ENCODE measurements at regions of chr7 and their contacts with region 1.

Region 1: DNA sequence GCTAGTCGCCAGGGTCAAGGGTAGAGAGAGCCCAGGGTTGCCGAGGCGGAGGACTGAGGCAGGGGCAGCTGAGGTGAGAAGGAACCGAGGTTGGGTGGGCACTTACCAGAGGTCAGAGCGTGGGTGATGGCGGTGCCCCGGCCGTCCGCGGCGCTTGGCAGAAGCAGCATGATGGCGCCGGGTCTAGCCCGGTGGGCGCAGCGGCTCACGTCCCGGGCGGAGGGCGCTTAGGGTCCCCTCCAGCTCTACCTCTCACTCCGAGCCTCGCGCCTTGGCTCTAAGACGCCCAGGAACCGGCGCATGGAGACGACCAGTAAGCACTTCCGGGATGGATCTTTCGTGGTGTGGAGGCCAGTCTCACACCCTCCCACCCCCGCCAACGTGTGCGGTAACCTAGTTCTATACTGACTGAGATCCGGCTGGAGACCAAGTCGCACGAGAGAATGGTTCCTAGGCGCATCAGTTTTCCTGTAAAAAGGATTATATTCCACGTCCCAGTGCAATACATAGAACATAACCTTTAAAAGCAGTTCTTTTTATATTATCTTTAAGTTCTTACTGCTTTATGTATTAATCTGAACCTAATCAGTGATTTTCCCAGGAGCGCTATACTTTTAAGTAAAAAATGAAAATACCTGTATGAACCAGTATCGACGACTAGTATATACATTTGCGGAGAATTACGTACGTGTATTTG is at the start of gene DNAJC2:
- DNase-seq: peak; percentile 72 to 95 (median 86)
- ATAC-seq: peak; percentile 88
- H3K4me3 ChIP-seq: peak within 1 kb of the TSS; percentile 82 to 96
- H3K4me3 Mint-ChIP-seq: peak within 1 kb of the TSS; percentile 95
- H3K27ac ChIP-seq: peak within 1 kb of the TSS; percentile 86
- H3K27ac Mint-ChIP-seq: peak within 1 kb of the TSS; percentile 97
- H3K4me1 ChIP-seq: peaks cover 45% of the 10 kb centered on the region
- H3K4me1 Mint-ChIP-seq: peaks cover 70% of the 10 kb centered on the region
- H3K27me3 ChIP-seq: no peaks in the 10 kb centered on the region
- H3K27me3 Mint-ChIP-seq: no peaks in the 10 kb centered on the region
- CTCF ChIP-seq: no peak
- total RNA-seq, gene DNAJC2: 84.5 to 94.6 TPM

Region 2: DNA sequence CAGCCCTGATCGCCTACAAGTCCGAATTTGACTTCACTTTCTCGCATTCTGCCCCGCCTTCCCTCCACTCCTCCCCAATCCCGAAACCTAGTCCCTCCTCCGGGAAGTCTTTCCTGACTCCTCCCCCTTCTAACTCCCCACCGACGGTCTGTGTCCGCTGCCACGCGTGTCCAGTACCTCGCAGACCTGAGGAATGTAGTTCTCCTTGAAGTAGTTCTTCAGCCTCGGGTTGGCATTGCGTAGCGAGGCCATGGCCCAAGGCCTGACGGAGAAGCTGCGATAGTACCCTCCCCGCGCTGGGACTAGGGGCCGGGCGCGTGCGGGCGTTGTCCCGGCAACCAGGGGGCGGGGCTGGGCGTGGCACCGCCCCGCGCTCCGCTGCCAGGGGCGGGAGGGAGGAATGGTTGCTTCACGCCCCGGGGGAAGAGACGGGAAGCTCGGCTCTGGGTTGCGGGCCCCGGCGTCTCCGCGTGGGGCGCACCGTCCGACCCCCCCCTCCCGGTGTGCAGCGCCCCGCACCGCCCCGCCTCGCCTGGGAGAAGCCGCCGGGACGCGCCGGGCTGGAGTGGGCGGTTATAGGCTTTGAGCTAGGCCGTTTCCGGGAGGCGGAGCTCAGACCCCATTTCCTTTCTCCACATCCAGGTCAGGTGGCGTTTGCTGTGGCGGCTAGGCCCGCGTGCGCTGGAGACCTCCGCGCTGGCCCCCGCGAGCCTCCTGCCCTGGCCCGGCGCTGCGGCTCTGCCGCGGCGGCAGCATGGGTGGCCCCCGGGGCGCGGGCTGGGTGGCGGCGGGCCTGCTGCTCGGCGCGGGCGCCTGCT is 269.9 kb before region 1 on chr7 and contains the starts of genes ARMC10 and FBXL13:
- CTCF ChIA-PET with region 1: no interaction called
- POLR2A ChIA-PET with region 1: no interaction called
- intact Hi-C with region 1: loop called (anchors 1 to 10 kb)
- DNase-seq: peak; percentile 79 to 95 (median 87)
- ATAC-seq: peak; percentile 78
- H3K4me3 ChIP-seq: peak within 1 kb of the TSS; percentile 81 to 99
- H3K4me3 Mint-ChIP-seq: peak within 1 kb of the TSS; percentile 98
- H3K27ac ChIP-seq: peak within 1 kb of the TSS; percentile 77 to 81
- H3K27ac Mint-ChIP-seq: peak within 1 kb of the TSS; percentile 96
- H3K4me1 ChIP-seq: peaks cover 26% of the 10 kb centered on the region
- H3K4me1 Mint-ChIP-seq: peaks cover 45% of the 10 kb centered on the region
- H3K27me3 ChIP-seq: no peaks in the 10 kb centered on the region
- H3K27me3 Mint-ChIP-seq: no peaks in the 10 kb centered on the region
- CTCF ChIP-seq: no peak
- total RNA-seq, gene ARMC10: 6.3 to 6.6 TPM
- total RNA-seq, gene FBXL13: 1.5 to 2.4 TPM

Region 3: GRCh38 chr7:103148994-103149807 is 195.4 kb before region 1 on chr7 and contains the start of gene NAPEPLD:
- CTCF ChIA-PET with region 1: no interaction called
- POLR2A ChIA-PET with region 1: no interaction called
- intact Hi-C with region 1: loop called (anchors 5 kb)
- DNase-seq: peak; percentile 47 to 89 (median 68)
- ATAC-seq: peak; percentile 90
- H3K4me3 ChIP-seq: peak within 1 kb of the TSS; percentile 93 to 95
- H3K4me3 Mint-ChIP-seq: peak within 1 kb of the TSS; percentile 98
- H3K27ac ChIP-seq: peak within 1 kb of the TSS; percentile 68 to 84
- H3K27ac Mint-ChIP-seq: peak within 1 kb of the TSS; percentile 96
- H3K4me1 ChIP-seq: peaks cover 21% of the 10 kb centered on the region
- H3K4me1 Mint-ChIP-seq: peaks cover 46% of the 10 kb centered on the region
- H3K27me3 ChIP-seq: no peaks in the 10 kb centered on the region
- H3K27me3 Mint-ChIP-seq: no peaks in the 10 kb centered on the region
- CTCF ChIP-seq: no peak
- total RNA-seq, gene NAPEPLD: 0.81 to 2.8 TPM

Region 4: GRCh38 chr7:103296901-103297836 is 47.4 kb before region 1 on chr7 and contains the start of gene PMPCB:
- CTCF ChIA-PET with region 1: no interaction called
- POLR2A ChIA-PET with region 1: no interaction called
- intact Hi-C with region 1: loop called (anchors 1 kb)
- DNase-seq: peak; percentile 92 to 98 (median 97)
- ATAC-seq: peak; percentile 100
- H3K4me3 ChIP-seq: peak within 1 kb of the TSS; percentile 72 to 75
- H3K4me3 Mint-ChIP-seq: peak within 1 kb of the TSS; percentile 83
- H3K27ac ChIP-seq: peak within 1 kb of the TSS; percentile 76 to 92
- H3K27ac Mint-ChIP-seq: peak within 1 kb of the TSS; percentile 85
- H3K4me1 ChIP-seq: peaks cover 19% of the 10 kb centered on the region
- H3K4me1 Mint-ChIP-seq: peaks cover 43% of the 10 kb centered on the region
- H3K27me3 ChIP-seq: no peaks in the 10 kb centered on the region
- H3K27me3 Mint-ChIP-seq: no peaks in the 10 kb centered on the region
- CTCF ChIP-seq: peak; percentile 82
- total RNA-seq, gene PMPCB: 104 to 108 TPM

Region 5: DNA sequence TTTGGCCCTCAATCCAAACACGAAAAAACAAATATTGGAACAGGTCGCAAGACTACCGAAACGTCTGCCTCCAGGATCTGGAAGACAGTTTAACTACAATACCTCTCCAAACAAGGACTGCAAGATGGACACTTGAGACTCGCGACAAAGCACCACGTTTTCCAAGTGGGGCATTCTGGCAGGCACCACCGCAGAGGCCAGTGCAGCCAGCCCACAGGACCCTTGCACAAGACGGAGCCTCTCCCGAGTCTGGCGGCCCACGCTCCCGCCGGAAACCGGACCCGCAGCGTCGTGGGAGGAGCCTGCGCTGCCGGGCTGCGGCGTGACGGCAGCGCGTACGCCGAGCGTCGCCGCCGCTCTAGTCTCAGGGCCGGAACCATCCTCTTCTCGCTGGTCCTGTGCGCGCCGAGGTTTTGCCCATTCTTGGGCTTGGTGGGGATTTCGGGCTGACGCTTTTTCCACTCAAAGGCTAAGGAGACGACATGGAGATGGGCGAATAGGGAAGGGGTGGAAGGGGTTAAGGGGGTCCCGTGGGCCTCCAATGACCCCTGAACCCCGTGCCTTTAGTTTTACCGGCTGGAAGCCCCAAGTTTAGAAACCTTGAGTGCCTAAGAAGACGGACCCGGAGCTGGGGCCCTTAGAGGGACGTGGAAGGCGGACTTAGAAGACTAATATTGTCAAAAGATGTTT is 863.3 kb after region 1 on chr7 and contains the start of gene ORC5:
- CTCF ChIA-PET with region 1: no interaction called
- POLR2A ChIA-PET with region 1: no interaction called
- intact Hi-C with region 1: loop called (anchors 5 to 10 kb)
- DNase-seq: peak; percentile 41 to 90 (median 73)
- ATAC-seq: peak; percentile 95
- H3K4me3 ChIP-seq: peak within 1 kb of the TSS; percentile 85 to 87
- H3K4me3 Mint-ChIP-seq: peak within 1 kb of the TSS; percentile 92
- H3K27ac ChIP-seq: peak within 1 kb of the TSS; percentile 75 to 91
- H3K27ac Mint-ChIP-seq: peak within 1 kb of the TSS; percentile 95
- H3K4me1 ChIP-seq: peaks cover 17% of the 10 kb centered on the region
- H3K4me1 Mint-ChIP-seq: peaks cover 49% of the 10 kb centered on the region
- H3K27me3 ChIP-seq: no peaks in the 10 kb centered on the region
- H3K27me3 Mint-ChIP-seq: peaks cover 15% of the 10 kb centered on the region
- CTCF ChIP-seq: no peak
- total RNA-seq, gene ORC5: 9.7 to 11.3 TPM

Region 6: DNA sequence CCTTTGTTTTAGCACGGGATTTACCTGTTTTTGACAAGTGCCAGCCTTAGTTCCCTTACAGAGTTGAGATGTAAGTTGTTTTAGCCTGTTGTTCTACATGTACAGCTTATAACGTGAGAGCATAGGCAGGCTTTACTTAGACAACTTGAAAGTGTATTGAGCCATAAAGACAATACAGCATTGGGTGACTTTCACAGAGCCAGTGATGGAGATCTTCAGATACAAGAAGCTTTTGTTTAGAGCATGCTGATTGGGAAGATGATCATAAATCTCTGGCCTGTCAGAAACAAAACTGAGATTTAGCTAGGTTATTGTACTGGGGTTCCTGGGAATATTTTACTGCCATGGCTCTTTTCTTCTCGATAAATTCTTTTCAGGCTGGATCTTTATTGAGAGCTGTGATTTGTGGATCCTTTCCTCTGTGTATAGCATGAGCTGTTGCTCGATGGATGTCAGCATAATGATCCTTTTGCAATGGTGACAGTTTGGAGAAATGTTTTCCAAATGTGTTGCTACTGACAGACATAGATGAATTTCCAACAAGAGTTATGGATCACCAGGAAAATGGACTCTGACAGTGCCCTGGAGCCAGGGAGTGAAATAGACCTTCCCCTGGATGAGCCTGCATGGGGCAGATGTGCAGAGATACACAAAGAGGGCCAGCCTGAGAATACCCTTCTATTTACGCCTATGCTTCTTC is 1014.0 kb after region 1 on chr7:
- CTCF ChIA-PET with region 1: no interaction called
- POLR2A ChIA-PET with region 1: no interaction called
- intact Hi-C with region 1: no loop called
- DNase-seq: no peak
- ATAC-seq: no peak
- H3K4me3 ChIP-seq: no peak overlapping the region
- H3K4me3 Mint-ChIP-seq: no peak overlapping the region
- H3K27ac ChIP-seq: no peak overlapping the region
- H3K27ac Mint-ChIP-seq: no peak overlapping the region
- H3K4me1 ChIP-seq: no peaks in the 10 kb centered on the region
- H3K4me1 Mint-ChIP-seq: no peaks in the 10 kb centered on the region
- H3K27me3 ChIP-seq: no peaks in the 10 kb centered on the region
- H3K27me3 Mint-ChIP-seq: peaks cover 2% of the 10 kb centered on the region
- CTCF ChIP-seq: no peak